Common myeloid progenitor, CD34-positive (primary cell): ENCODE measurements at regions of chr3 and their contacts with region 1.

Region 1: DNA sequence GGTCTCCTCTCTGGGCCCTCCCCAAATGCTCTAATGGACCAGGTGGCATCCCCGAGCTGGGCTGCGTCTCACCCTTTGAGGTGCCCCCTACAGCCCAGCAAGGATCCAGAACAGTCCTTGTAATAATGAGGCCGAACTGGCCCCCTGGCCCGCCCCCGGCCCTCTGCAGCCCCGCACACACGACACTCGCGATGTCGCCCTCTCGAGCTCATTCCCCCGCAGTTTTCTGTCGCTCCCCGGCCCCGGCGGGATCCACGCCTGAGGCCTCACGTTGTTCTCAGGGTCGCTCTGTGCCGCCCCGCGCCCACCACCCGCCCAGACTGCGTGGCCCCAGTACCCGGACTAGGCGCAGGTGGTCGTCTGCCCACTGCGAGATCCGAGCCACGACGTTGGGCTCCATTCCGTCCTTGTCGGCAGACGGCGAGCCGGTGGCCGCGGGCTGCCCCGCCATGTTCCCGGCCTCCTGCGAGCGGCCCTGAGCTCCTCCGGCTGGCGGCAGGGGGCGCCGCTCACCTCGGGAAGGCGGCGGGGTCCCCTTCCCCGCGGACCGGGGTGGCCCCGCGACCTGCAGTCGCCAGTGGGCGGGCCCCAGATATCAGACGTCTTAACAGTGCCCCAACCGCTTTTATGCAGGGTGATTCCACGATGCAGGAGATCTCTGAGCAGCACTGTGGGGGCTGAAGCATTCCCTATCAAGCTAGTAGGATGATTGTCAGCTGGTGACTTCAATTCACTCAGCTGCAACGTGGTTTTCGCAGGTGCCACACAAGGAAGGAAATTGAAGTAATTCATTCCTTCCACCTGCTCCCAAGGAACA is at the start of gene C3orf33:
- DNase-seq: peak; percentile 78 to 85 (median 84)
- H3K4me3 ChIP-seq: peak within 1 kb of the TSS; percentile 58 to 83 (median 75)
- H3K27ac ChIP-seq: peak within 1 kb of the TSS; percentile 46 to 79
- H3K4me1 ChIP-seq: peaks cover 0 to 11% (median 5%) of the 10 kb centered on the region in 4 experiments
- H3K27me3 ChIP-seq: no peaks in the 10 kb centered on the region

Region 2: DNA sequence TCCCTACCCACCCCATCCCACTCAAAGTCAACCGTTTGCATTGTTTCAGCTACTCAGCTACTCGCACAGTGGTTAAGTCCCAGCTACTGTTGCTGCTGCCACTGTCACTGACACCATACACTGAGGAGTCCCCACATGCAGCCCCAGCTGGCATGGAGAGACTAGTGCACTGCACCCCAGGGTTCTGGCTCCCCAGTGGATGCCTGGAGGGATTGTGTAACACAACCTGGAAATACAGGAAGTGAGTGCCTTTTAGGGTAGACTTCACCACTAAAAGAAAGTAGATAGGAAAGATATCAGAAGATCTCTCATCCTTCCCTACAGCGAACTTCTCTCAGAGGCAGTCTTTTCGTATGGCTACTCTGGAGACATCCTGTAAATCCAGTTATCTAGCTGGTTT is 343.3 kb before region 1 on chr3:
- CTCF ChIA-PET with region 1: no interaction called
- POLR2A ChIA-PET with region 1: no interaction called
- DNase-seq: no peak
- H3K4me3 ChIP-seq: no peak overlapping the region
- H3K27ac ChIP-seq: no peak overlapping the region
- H3K4me1 ChIP-seq: no peaks in the 10 kb centered on the region
- H3K27me3 ChIP-seq: no peaks in the 10 kb centered on the region

Region 3: GRCh38 chr3:155791190-155791589 is 14.8 kb before region 1 on chr3:
- CTCF ChIA-PET with region 1: interaction called, 17 read pairs
- POLR2A ChIA-PET with region 1: interaction called, 3 read pairs
- DNase-seq: peak in 2 of 3 donors; percentile 43 to 52
- H3K4me3 ChIP-seq: no peak overlapping the region
- H3K27ac ChIP-seq: no peak overlapping the region
- H3K4me1 ChIP-seq: peaks cover 0 to 3% (median 0%) of the 10 kb centered on the region in 4 experiments
- H3K27me3 ChIP-seq: no peaks in the 10 kb centered on the region

Region 4: DNA sequence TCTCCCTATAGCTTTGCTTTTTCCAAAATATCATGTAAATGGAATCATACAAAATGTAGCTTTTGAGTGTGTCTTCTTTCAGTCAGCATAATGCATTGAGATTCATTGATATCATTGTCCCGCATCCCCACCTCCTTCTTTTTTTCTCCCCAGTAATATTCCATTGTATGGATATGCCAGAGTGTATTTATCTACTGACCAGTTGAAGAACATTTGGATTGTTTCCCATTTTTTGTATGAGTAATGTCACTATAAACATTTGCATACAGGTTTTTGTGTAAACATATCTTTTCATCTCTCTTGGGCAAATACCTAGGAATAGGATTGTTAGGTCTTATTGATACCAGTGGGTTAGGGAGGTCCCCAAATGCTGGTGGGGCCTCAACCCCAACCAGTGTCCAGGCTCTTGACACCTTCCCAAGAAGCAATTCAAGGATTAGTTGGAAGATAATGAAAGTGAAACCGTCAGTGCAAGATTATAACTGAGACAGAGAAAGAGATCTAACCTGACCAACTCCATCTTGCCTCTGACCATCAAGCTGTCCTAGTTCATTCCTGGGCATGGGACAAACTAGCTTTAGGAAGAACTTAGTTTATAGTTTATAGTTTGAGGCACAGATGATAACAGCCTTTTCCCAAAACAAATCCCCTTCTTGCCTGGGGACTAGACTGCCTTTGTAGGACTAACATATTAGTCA is 55.6 kb after region 1 on chr3:
- CTCF ChIA-PET with region 1: interaction called, 13 read pairs
- POLR2A ChIA-PET with region 1: no interaction called
- DNase-seq: no peak
- H3K4me3 ChIP-seq: no peak overlapping the region
- H3K27ac ChIP-seq: no peak overlapping the region
- H3K4me1 ChIP-seq: peaks cover 0 to 1% (median 0%) of the 10 kb centered on the region in 4 experiments
- H3K27me3 ChIP-seq: no peaks in the 10 kb centered on the region

Region 5: GRCh38 chr3:155870945-155871745 is 65.1 kb after region 1 on chr3:
- CTCF ChIA-PET with region 1: interaction called, 13 read pairs
- POLR2A ChIA-PET with region 1: interaction called, 3 read pairs
- DNase-seq: peak; percentile 21 to 67 (median 55)
- H3K4me3 ChIP-seq: peak overlapping the region; percentile 67 to 96 (median 92)
- H3K27ac ChIP-seq: peak overlapping the region; percentile 64 to 86
- H3K4me1 ChIP-seq: peaks cover 5 to 23% (median 13%) of the 10 kb centered on the region in 4 experiments
- H3K27me3 ChIP-seq: no peaks in the 10 kb centered on the region